ENCODE measurements at regions of chrX and their contacts with region 1.

Region 1: DNA sequence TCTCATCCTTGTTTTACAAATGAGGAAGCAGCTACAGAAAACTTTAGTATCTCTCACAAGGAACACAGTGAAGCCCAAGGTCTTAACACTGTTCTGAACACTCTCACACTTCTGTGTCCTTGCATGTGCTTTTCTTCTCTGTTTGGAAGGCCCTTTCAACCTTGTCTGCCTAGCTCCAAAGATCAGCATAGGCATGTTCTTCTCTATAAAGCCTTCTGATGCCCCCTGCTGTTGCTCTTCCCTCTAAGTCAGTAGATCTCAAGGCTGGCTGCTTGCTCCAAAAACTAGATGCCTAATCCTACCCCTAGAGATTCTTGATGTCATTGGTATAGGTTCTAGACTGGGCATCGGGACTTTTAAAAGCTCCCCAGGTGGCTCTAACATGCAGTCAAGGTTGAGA is 5.9 kb downstream of the APOO start:
- DNase-seq: peak in 1 of 2 donors; percentile 35
- H3K4me3 ChIP-seq: no peak overlapping the region
- CTCF ChIP-seq: no peak
- POLR2A ChIP-seq: no peak

Region 2: DNA sequence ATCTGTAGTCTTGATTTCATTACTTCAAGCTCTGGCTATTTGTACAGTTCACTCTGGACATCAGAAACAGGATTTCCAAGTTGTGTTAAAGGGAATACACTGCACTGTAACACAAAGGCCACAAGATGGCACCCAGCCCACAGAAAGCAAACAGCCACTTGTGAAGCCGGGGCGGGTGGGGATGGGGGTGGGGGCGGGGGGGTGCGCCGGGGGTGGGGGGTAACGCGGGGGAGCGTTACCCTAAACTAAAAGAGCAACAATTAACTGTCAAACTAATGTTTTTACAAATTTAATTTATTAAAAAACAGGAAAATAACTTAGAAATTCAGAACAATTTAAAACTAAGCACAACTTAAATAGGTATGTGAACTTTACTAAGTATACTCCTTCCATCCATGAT is 207.2 kb before region 1 on chrX:
- intact Hi-C with region 1: loop called (anchors 5 kb)
- DNase-seq: peak; percentile 19 to 89
- H3K4me3 ChIP-seq: no peak overlapping the region
- CTCF ChIP-seq: no peak
- POLR2A ChIP-seq: no peak

Region 3: GRCh38 chrX:24133280-24133679 is 231.5 kb after region 1 on chrX:
- intact Hi-C with region 1: no loop called
- DNase-seq: no peak
- H3K4me3 ChIP-seq: no peak overlapping the region
- CTCF ChIP-seq: no peak
- POLR2A ChIP-seq: no peak

Measured in lower leg skin (tissue), 4 donors.